CD4-positive, alpha-beta memory T cell (primary cell): ENCODE measurements at regions of chr11 and their contacts with region 1.

Region 1: GRCh38 chr11:62591448-62592145 is at the start of gene TUT1:
- DNase-seq: peak; percentile 96 to 98 (median 98)
- H3K4me3 ChIP-seq: peak within 1 kb of the TSS; percentile 69 to 87
- H3K4me3 Mint-ChIP-seq: peak within 1 kb of the TSS; percentile 89 to 98 (median 95)
- H3K27ac ChIP-seq: peak within 1 kb of the TSS; percentile 87
- H3K27ac Mint-ChIP-seq: peak within 1 kb of the TSS; percentile 87 to 98 (median 98)
- H3K4me1 ChIP-seq: peaks cover 43% of the 10 kb centered on the region
- H3K4me1 Mint-ChIP-seq: peaks cover 26 to 69% (median 44%) of the 10 kb centered on the region in 4 donors
- H3K27me3 ChIP-seq: no peaks in the 10 kb centered on the region
- H3K27me3 Mint-ChIP-seq: no peaks in the 10 kb centered on the region
- total RNA-seq, gene TUT1: 37.7 to 38.1 TPM

Region 2: GRCh38 chr11:62394825-62395538 is 196.6 kb before region 1 on chr11:
- CTCF ChIA-PET with region 1: interaction called, 20 read pairs
- POLR2A ChIA-PET with region 1: interaction called, 9 read pairs
- intact Hi-C with region 1: no loop called
- DNase-seq: peak; percentile 56 to 63 (median 59)
- H3K4me3 ChIP-seq: no peak overlapping the region
- H3K4me3 Mint-ChIP-seq: no peak overlapping the region
- H3K27ac ChIP-seq: no peak overlapping the region
- H3K27ac Mint-ChIP-seq: peak overlapping the region in 4 of 7 donors; percentile 58 to 68 (median 60)
- H3K4me1 ChIP-seq: peaks cover 24% of the 10 kb centered on the region
- H3K4me1 Mint-ChIP-seq: peaks cover 8 to 12% (median 10%) of the 10 kb centered on the region in 4 donors
- H3K27me3 ChIP-seq: no peaks in the 10 kb centered on the region
- H3K27me3 Mint-ChIP-seq: no peaks in the 10 kb centered on the region

Region 3: GRCh38 chr11:62573592-62574362 is 17.8 kb before region 1 on chr11 and contains the start of gene EEF1G:
- CTCF ChIA-PET with region 1: interaction called, 15 read pairs
- POLR2A ChIA-PET with region 1: interaction called, 114 read pairs
- intact Hi-C with region 1: loop called (anchors 1 kb)
- DNase-seq: peak; percentile 98 to 100 (median 100)
- H3K4me3 ChIP-seq: peak within 1 kb of the TSS; percentile 89 to 100
- H3K4me3 Mint-ChIP-seq: peak within 1 kb of the TSS; percentile 92 to 98 (median 98)
- H3K27ac ChIP-seq: peak within 1 kb of the TSS; percentile 77
- H3K27ac Mint-ChIP-seq: peak within 1 kb of the TSS; percentile 94 to 98 (median 97)
- H3K4me1 ChIP-seq: peaks cover 44% of the 10 kb centered on the region
- H3K4me1 Mint-ChIP-seq: peaks cover 34 to 60% (median 47%) of the 10 kb centered on the region in 4 donors
- H3K27me3 ChIP-seq: no peaks in the 10 kb centered on the region
- H3K27me3 Mint-ChIP-seq: no peaks in the 10 kb centered on the region
- total RNA-seq, gene EEF1G: 1,815 to 1,855 TPM

Region 4: DNA sequence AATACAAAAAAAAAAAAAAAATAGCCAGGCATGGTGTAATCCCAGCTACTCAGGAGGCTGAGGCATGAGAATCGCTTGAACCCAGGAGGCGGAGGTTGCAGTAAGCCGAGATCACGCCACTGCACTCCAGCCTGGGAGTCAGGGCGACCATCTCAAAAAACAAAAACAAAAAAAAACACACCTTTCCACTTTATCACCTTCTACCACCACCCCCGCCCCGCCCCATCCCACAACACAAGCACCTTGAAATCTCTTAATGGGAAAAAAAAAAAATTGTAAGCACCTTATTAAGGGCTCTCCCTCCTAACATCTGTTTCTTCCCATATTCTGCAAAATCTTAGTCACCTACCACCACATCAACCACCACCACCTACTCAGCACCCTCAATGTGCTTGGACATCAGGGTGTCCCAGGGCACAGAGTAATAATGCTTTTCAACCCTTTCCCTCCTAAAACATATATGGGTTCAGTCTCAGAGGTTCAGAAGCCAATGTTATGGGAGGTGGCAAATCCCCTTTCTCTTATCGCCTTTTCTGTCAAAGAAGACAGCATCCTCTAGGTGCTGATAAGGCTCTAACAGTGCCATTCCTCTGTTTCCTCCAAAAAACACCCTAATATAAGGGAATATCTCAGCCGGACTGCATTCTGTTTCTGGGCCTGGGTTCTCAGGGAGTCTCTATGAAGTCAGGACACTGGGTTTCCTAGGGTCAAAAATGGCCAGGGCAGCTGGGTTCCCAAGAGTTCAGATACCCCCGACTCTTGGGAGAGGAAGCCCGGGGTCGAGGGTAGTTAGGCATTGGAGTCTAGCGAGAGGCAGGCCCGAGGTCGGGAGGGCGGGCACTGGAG is 60.8 kb after region 1 on chr11:
- CTCF ChIA-PET with region 1: interaction called, 8 read pairs
- POLR2A ChIA-PET with region 1: interaction called, 55 read pairs
- intact Hi-C with region 1: loop called (anchors 1 kb)
- DNase-seq: peak in 3 of 5 donors; percentile 54 to 83 (median 68)
- H3K4me3 ChIP-seq: peak overlapping the region; percentile 92 to 97
- H3K4me3 Mint-ChIP-seq: peak overlapping the region; percentile 86 to 94 (median 92)
- H3K27ac ChIP-seq: peak overlapping the region; percentile 93
- H3K27ac Mint-ChIP-seq: peak overlapping the region; percentile 78 to 100 (median 94)
- H3K4me1 ChIP-seq: peaks cover 24% of the 10 kb centered on the region
- H3K4me1 Mint-ChIP-seq: peaks cover 13 to 40% (median 22%) of the 10 kb centered on the region in 4 donors
- H3K27me3 ChIP-seq: no peaks in the 10 kb centered on the region
- H3K27me3 Mint-ChIP-seq: no peaks in the 10 kb centered on the region

Region 5: DNA sequence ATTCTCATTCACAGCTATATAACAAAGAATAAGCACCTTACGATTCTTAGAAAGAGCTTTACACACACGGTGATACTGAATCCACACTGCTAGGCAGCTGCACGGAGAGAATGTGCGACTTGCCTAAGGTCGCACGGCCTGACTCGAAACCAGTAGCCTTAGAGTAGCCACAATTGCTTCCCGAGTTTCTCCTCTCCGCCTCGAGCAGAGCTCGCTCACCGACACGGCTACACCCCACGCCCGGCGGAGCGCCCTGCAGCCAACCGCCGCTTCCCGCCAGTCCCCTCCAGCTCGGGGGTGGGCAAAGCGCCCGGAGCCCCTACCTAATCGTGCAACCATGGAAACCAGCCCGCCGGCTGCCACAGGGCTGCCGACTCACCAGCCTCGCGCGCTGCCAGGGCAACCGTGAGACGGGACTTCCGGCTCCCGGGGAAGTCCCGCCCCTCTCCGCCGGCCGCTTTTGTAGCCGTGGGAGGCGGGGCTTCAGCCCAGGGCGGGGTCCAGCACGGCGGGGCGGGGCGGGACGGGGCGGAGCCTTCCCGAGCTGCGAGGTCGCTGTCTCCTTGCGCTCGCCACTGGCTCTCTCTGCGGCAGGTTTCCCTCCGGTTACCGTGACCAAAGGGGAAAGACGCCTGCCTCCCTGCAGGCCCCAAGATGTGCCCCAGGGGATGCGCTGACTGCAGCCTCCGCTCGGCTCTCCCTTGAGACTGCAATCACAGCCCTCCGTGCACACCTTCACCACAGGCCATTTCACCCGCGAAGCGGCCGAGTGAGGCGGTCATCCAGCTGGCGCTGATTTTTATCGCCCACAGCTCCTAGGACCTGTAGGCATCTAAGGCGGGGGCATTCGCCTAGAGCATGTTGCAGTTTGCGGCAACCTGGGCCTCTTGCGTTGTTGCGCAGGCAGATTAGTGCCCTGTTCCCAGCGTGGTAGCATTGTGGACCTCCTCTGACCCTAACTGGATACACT is 114.6 kb after region 1 on chr11:
- CTCF ChIA-PET with region 1: interaction called, 3 read pairs
- POLR2A ChIA-PET with region 1: interaction called, 99 read pairs
- intact Hi-C with region 1: loop called (anchors 1 kb)
- DNase-seq: peak; percentile 90 to 95 (median 91)
- H3K4me3 ChIP-seq: peak overlapping the region; percentile 69 to 86
- H3K4me3 Mint-ChIP-seq: peak overlapping the region; percentile 86 to 95 (median 89)
- H3K27ac ChIP-seq: peak overlapping the region; percentile 78
- H3K27ac Mint-ChIP-seq: peak overlapping the region; percentile 91 to 98 (median 94)
- H3K4me1 ChIP-seq: peaks cover 50% of the 10 kb centered on the region
- H3K4me1 Mint-ChIP-seq: peaks cover 21 to 51% (median 36%) of the 10 kb centered on the region in 4 donors
- H3K27me3 ChIP-seq: no peaks in the 10 kb centered on the region
- H3K27me3 Mint-ChIP-seq: no peaks in the 10 kb centered on the region

Region 6: DNA sequence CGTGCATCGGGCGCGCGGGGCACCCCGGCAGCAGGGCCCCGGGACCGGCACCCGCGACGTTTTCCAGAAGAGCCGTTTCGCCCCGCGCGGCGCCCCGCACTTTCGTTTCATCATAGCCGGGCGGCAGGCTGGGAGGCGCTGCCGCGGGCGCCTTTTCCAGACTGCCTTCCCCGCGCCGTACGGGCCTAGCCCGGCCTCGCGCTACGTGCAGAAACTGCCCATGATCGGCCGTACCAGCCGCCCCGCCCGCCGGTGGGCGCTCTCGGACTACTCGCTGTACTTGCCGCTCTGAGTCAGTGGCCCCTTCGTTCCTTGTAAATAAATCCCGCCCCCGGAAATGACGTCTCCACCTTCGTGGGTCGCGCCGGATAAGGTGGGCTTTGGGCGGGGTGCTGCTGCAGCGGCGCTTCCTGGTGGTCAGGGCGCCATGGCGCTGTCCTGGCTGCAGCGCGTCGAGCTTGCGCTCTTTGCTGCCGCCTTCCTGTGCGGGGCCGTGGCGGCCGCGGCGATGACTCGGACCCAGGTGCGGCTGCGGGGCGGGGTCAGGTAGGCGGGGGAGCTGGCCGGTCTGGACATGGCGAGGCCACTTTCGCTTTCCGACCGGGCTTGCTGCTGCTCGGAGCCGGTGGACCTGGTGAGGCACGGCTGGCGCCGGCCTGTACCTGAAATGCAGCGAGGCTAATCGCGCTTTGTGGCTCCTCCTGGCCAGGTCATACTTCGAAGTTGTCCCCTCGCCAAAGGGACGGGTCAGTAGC is 195.6 kb after region 1 on chr11 and contains the start of gene TMEM179B:
- CTCF ChIA-PET with region 1: interaction called, 3 read pairs
- POLR2A ChIA-PET with region 1: interaction called, 24 read pairs
- intact Hi-C with region 1: no loop called
- DNase-seq: peak; percentile 95 to 99 (median 96)
- H3K4me3 ChIP-seq: peak within 1 kb of the TSS; percentile 73 to 95
- H3K4me3 Mint-ChIP-seq: peak within 1 kb of the TSS; percentile 93 to 97 (median 96)
- H3K27ac ChIP-seq: peak within 1 kb of the TSS; percentile 84
- H3K27ac Mint-ChIP-seq: peak within 1 kb of the TSS; percentile 89 to 98 (median 97)
- H3K4me1 ChIP-seq: peaks cover 45% of the 10 kb centered on the region
- H3K4me1 Mint-ChIP-seq: peaks cover 29 to 61% (median 47%) of the 10 kb centered on the region in 4 donors
- H3K27me3 ChIP-seq: no peaks in the 10 kb centered on the region
- H3K27me3 Mint-ChIP-seq: no peaks in the 10 kb centered on the region
- total RNA-seq, gene TMEM179B: 66.3 to 66.6 TPM

Region 7: GRCh38 chr11:62860835-62861563 is 269.4 kb after region 1 on chr11:
- CTCF ChIA-PET with region 1: interaction called, 5 read pairs
- POLR2A ChIA-PET with region 1: interaction called, 32 read pairs
- intact Hi-C with region 1: loop called (anchors 5 kb)
- DNase-seq: no peak
- H3K4me3 ChIP-seq: no peak overlapping the region
- H3K4me3 Mint-ChIP-seq: no peak overlapping the region
- H3K27ac ChIP-seq: no peak overlapping the region
- H3K27ac Mint-ChIP-seq: peak overlapping the region in 2 of 7 donors; percentile 37 to 72
- H3K4me1 ChIP-seq: peaks cover 23% of the 10 kb centered on the region
- H3K4me1 Mint-ChIP-seq: peaks cover 11 to 25% (median 18%) of the 10 kb centered on the region in 4 donors
- H3K27me3 ChIP-seq: no peaks in the 10 kb centered on the region
- H3K27me3 Mint-ChIP-seq: no peaks in the 10 kb centered on the region